ENCODE measurements at regions of chrX and their contacts with region 1.

Region 1: GRCh38 chrX:103918581-103919269 is 43.7 kb upstream of the TMSB15B start:
- DNase-seq: peak in 1 of 4 experiments; percentile 6
- ATAC-seq: peak; percentile 52
- H3K4me3 ChIP-seq: no peak overlapping the region
- H3K27ac ChIP-seq: no peak overlapping the region
- H3K4me1 ChIP-seq: peaks cover 0 to 7% of the 10 kb centered on the region in 2 experiments; a peak in 2 of 5 replicates
- H3K27me3 ChIP-seq: peaks cover 0 to 11% of the 10 kb centered on the region in 2 experiments; a peak in 2 of 5 replicates
- CTCF ChIP-seq: no peak
- EP300 ChIP-seq: no peak
- POLR2A ChIP-seq: no peak
- RAD21 ChIP-seq: no peak

Region 2: DNA sequence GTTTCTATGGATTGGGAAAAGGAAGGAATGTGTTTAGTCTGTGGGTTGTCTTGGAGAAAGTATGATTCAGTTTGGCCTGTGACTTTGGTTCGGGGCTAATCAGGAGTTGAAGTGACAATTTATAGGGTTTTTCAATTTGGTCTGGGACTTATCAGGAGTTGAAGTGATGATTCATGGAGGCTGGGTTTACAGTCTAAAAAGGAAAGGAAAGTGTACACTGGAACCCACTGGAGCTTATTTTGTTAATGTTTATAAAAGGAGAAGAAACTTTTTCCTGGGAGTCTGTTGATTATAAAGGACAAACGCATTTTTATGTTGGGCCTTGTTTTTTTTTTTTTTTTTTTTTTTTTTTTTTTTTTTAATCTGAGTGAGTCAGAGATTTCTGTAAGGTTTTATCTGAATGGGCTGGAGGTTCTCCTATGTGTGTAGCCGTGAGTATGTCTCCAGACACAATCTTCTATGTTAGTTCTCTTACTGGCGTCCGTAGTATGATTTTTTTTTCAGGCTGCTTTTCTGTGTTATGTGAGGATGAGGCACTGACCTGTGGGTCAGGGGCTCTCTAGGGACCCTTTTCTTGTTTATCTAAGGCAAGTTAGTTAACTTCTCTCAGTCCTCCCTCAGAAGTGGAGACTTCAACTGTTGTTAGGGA is 53.7 kb before region 1 on chrX:
- CTCF ChIA-PET with region 1: no interaction called
- POLR2A ChIA-PET with region 1: no interaction called
- in situ Hi-C with region 1: no loop called
- intact Hi-C with region 1: loop called (anchors 5 kb)
- DNase-seq: no peak
- ATAC-seq: no peak
- H3K4me3 ChIP-seq: no peak overlapping the region
- H3K27ac ChIP-seq: no peak overlapping the region
- H3K4me1 ChIP-seq: no peaks in the 10 kb centered on the region
- H3K27me3 ChIP-seq: no peaks in the 10 kb centered on the region
- CTCF ChIP-seq: no peak
- EP300 ChIP-seq: no peak
- POLR2A ChIP-seq: no peak
- RAD21 ChIP-seq: no peak

Region 3: GRCh38 chrX:103954259-103954658 is 35.5 kb after region 1 on chrX:
- CTCF ChIA-PET with region 1: no interaction called
- POLR2A ChIA-PET with region 1: no interaction called
- in situ Hi-C with region 1: no loop called
- intact Hi-C with region 1: no loop called
- DNase-seq: no peak
- ATAC-seq: no peak
- H3K4me3 ChIP-seq: no peak overlapping the region
- H3K27ac ChIP-seq: no peak overlapping the region
- H3K4me1 ChIP-seq: no peaks in the 10 kb centered on the region
- H3K27me3 ChIP-seq: no peaks in the 10 kb centered on the region
- CTCF ChIP-seq: no peak
- EP300 ChIP-seq: no peak
- POLR2A ChIP-seq: no peak
- RAD21 ChIP-seq: no peak